Heart right ventricle (tissue), 16 donors: ENCODE measurements at regions of chr6 and their contacts with region 1.

Region 1: DNA sequence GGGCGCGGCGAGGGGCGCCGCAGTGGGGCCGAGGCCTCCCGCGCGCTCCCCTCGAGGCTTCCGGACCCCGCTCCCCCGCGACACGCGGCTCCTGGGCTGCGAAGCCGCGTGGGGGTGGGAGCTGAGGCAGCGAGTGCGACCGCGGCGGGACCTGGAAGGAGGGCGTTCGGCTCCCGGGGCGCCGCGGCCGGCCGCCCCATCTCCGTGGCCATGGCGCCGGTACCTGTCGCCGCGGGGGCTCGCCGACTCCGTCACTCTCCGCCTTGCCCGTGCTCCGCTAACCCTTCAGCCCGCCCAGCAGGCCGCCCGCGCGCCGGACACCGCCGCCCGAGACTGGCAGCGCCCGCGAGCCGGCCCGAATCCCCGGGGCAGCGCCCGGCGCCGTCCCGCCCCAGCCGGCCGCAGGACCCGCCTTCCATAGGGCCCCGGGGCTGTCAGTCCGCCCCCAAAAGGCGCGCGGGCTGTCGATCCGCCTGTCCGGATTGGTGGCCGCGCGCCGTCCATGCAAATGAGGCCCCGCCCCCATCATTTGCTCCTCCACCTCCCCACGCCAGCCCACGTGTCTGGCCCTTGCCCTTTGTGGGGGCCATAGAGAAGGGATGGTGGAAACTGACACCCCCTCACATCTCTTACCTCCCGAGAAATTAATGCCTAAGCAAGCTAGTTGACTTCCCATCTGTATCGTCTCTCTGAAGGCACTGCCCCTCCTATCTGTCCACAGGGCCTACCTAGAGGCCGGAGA is at the start of gene FKBP5:
- DNase-seq: peak; percentile 96
- ATAC-seq: peak; percentile 93 to 99 (median 97)
- H3K4me3 ChIP-seq: peak within 1 kb of the TSS; percentile 72 to 97 (median 93)
- H3K27ac ChIP-seq: peak within 1 kb of the TSS; percentile 87 to 99 (median 93)
- H3K4me1 ChIP-seq: peaks cover 0 to 65% (median 34%) of the 10 kb centered on the region in 9 donors
- H3K27me3 ChIP-seq: no peaks in the 10 kb centered on the region
- CTCF ChIP-seq: peak in 1 of 9 donors; percentile 8
- total RNA-seq, gene FKBP5: 20.3 to 151 (median 45.3) TPM

Region 2: DNA sequence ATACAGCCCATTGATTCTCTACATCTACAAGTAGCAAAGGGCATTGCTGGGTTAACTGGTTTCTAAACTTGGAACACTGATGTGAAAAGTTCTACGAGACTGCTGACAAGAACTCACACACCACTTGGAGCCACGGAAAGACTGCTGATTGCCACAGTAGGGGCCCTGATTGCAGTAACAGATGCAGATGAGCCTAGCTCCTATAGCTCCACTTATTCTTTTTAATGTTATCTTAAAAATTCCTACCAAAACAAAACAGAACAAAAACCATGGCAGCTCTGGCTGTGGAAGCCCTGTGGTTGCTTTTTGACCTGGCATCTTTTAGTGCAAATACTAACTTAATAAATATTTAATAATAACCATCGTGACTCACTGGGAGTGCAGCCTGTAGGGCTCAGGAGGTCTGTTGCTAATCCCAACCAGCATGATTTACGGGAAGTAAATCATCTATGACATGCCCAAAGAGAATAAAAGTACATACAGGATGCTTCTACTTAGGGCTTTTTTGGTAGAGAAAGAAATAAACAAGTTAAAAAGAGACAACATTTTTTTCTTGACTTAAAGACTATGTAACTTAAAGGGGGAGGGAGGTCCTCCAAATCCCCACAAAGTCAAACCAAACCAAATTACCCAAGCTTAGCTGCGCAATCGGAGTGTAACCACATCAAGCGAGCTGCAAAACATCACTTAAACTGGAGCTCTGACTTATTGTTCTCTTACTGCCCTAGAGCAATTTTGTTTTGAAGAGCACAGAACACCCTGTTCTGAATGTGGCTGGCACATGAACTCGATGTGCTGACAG is 87.2 kb before region 1 on chr6:
- intact Hi-C with region 1: loop called in 4 of 10 experiments (anchors 5 to 10 kb)
- DNase-seq: peak in 1 of 2 donors; percentile 25
- ATAC-seq: peak; percentile 72 to 92 (median 88)
- H3K4me3 ChIP-seq: peak overlapping the region in 7 of 10 donors; percentile 2 to 41 (median 29)
- H3K27ac ChIP-seq: peak overlapping the region; percentile 84 to 96 (median 91)
- H3K4me1 ChIP-seq: peaks cover 14 to 94% (median 46%) of the 10 kb centered on the region in 9 donors
- H3K27me3 ChIP-seq: no peaks in the 10 kb centered on the region
- CTCF ChIP-seq: no peak

Region 3: DNA sequence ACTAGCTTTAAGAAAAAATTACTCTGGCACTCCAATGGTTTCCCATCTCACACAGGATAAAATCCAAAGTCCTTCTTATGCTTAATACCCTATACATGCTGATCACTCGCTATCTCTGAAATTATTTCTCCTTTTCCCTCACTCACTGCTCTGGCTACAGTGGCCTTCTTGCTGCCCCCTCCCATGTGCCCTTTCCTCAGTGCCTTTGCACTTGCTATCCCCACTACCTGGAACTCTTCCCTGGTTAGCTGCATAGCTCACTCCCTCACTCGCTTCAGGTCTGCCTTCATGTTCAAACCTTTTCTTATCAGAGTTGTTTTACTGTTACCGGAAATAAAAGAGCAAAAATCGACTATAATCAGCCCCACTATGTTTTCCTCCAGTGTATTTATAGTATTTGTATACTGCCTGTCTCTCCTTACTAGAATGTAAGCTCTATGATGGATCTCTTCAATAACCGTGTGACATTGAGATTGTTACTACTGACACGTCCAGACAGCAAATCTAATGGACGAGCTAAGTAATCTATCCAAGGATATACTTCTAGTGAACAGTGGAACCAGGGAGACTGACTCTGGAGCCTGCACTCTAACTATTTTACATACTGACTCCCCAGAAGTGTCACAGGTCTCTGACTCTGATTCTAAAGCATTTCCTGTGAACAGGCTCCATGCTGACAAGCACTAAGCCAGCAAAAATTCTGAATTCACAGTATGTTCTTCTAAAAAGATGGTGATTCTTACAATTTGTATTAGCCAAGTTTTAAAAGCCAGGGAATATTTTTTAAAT is 25.1 kb before region 1 on chr6:
- intact Hi-C with region 1: loop called in 1 of 10 experiments (anchors 2 kb)
- DNase-seq: no peak
- ATAC-seq: peak in 5 of 8 donors; percentile 25 to 58 (median 57)
- H3K4me3 ChIP-seq: no peak overlapping the region
- H3K27ac ChIP-seq: peak overlapping the region in 2 of 10 donors; percentile 51 to 66
- H3K4me1 ChIP-seq: peaks cover 0 to 60% (median 43%) of the 10 kb centered on the region in 9 donors
- H3K27me3 ChIP-seq: no peaks in the 10 kb centered on the region
- CTCF ChIP-seq: no peak

Region 4: GRCh38 chr6:35719830-35720733 is 31.3 kb after region 1 on chr6:
- intact Hi-C with region 1: loop called in 5 of 10 experiments (anchors 1 to 5 kb)
- DNase-seq: peak; percentile 45 to 52
- ATAC-seq: peak; percentile 39 to 82 (median 76)
- H3K4me3 ChIP-seq: peak overlapping the region in 9 of 10 donors; percentile 23 to 42 (median 37)
- H3K27ac ChIP-seq: peak overlapping the region; percentile 65 to 93 (median 88)
- H3K4me1 ChIP-seq: peaks cover 21 to 76% (median 42%) of the 10 kb centered on the region in 9 donors
- H3K27me3 ChIP-seq: no peaks in the 10 kb centered on the region
- CTCF ChIP-seq: no peak

Region 5: DNA sequence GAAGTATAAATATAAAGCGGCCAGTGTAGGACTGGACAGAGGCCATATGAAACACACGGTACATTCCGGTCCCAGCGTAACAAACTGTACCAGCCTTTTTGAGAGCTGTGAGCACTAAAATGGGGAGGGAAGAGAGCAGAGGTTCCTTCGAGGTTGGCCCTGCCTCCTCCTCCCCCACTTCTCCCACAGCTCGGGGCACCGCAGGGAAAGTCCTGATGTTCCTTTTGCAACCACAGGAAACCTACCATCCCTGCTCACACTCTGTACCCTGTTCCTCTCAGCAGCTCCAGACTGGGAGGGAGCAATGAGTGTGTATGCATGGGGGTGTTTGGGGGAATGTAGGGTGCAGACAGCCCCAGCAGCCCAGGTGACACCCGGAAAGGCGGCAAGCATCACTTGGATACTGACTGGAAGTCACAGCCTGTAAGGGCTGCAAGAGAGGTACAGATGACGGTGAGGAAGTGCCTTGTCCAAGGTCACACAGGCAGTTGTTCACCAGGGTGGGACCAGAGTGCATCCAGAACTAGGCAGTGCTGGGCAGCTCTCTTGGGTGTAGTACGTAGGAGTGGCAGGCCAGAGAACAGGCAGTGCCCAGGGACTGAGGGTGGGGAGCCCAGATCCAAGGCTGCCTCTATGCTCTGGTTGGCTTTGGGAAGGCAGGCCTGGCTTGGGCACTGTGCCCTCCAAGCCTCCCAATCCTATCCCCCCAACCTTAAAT is 37.1 kb after region 1 on chr6:
- intact Hi-C with region 1: loop called in 9 of 10 experiments (anchors 2 to 5 kb)
- DNase-seq: peak; percentile 13 to 57
- ATAC-seq: peak in 5 of 8 donors; percentile 23 to 64 (median 30)
- H3K4me3 ChIP-seq: no peak overlapping the region
- H3K27ac ChIP-seq: peak overlapping the region; percentile 59 to 100 (median 98)
- H3K4me1 ChIP-seq: peaks cover 27 to 93% (median 63%) of the 10 kb centered on the region in 9 donors
- H3K27me3 ChIP-seq: no peaks in the 10 kb centered on the region
- CTCF ChIP-seq: no peak

Region 6: GRCh38 chr6:35731736-35732532 is 43.2 kb after region 1 on chr6:
- intact Hi-C with region 1: loop called in 9 of 10 experiments (anchors 1 to 5 kb)
- DNase-seq: peak; percentile 95 to 98
- ATAC-seq: peak; percentile 60 to 86 (median 77)
- H3K4me3 ChIP-seq: peak overlapping the region; percentile 42 to 96 (median 84)
- H3K27ac ChIP-seq: peak overlapping the region; percentile 98 to 100 (median 100)
- H3K4me1 ChIP-seq: peaks cover 21 to 80% (median 56%) of the 10 kb centered on the region in 9 donors
- H3K27me3 ChIP-seq: no peaks in the 10 kb centered on the region
- CTCF ChIP-seq: peak in 5 of 9 donors; percentile 9 to 47 (median 21)

Region 7: GRCh38 chr6:35844290-35844689 is 155.5 kb after region 1 on chr6:
- intact Hi-C with region 1: no loop called
- DNase-seq: no peak
- ATAC-seq: no peak
- H3K4me3 ChIP-seq: no peak overlapping the region
- H3K27ac ChIP-seq: no peak overlapping the region
- H3K4me1 ChIP-seq: no peaks in the 10 kb centered on the region
- H3K27me3 ChIP-seq: no peaks in the 10 kb centered on the region
- CTCF ChIP-seq: no peak

Region 8: GRCh38 chr6:36104836-36105235 is 416.1 kb after region 1 on chr6:
- intact Hi-C with region 1: no loop called
- DNase-seq: no peak
- ATAC-seq: peak in 5 of 8 donors; percentile 68 to 87 (median 72)
- H3K4me3 ChIP-seq: no peak overlapping the region
- H3K27ac ChIP-seq: no peak overlapping the region
- H3K4me1 ChIP-seq: peaks cover 0 to 19% (median 13%) of the 10 kb centered on the region in 9 donors
- H3K27me3 ChIP-seq: no peaks in the 10 kb centered on the region
- CTCF ChIP-seq: no peak